ENCODE measurements at regions of chr19 and their contacts with region 1.

Region 1: GRCh38 chr19:13298565-13299481 is 148.6 kb downstream of the IER2 start:
- DNase-seq: no peak
- ATAC-seq: no peak
- H3K4me3 ChIP-seq: peak overlapping the region in 9 of 10 donors; percentile 3 to 38 (median 32)
- H3K27ac ChIP-seq: peak overlapping the region in 1 of 10 donors; percentile 19
- H3K4me1 ChIP-seq: no peaks in the 10 kb centered on the region
- H3K27me3 ChIP-seq: peaks cover 6 to 80% (median 54%) of the 10 kb centered on the region in 7 donors
- CTCF ChIP-seq: no peak

Region 2: DNA sequence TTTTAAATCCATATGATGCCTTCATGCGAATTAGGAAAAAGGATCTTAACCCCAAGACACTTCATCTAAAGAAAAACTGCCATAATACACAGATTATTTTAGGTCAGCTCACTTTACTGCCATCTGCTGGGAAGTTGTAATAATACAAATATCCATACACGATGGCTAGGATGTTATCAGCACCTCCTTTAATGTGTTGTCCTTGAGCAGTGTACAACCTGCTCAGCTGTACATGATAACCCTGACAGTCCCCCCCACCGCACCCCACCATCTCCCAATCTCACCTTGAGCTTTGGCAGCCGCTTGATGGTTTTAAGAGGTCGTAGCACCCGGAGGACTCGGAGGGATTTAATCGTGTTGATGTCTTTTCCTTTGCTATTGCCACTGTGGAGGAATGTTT is 36.4 kb before region 1 on chr19:
- intact Hi-C with region 1: no loop called
- DNase-seq: no peak
- ATAC-seq: peak; percentile 33 to 75 (median 58)
- H3K4me3 ChIP-seq: no peak overlapping the region
- H3K27ac ChIP-seq: no peak overlapping the region
- H3K4me1 ChIP-seq: peaks cover 0 to 18% (median 0%) of the 10 kb centered on the region in 9 donors
- H3K27me3 ChIP-seq: peaks cover 0 to 5% (median 0%) of the 10 kb centered on the region in 7 donors
- CTCF ChIP-seq: peak in 8 of 9 donors; percentile 39 to 76 (median 66)

Region 3: GRCh38 chr19:13277104-13277809 is 21.6 kb before region 1 on chr19:
- intact Hi-C with region 1: no loop called
- DNase-seq: peak; percentile 29 to 67
- ATAC-seq: peak; percentile 83 to 95 (median 92)
- H3K4me3 ChIP-seq: no peak overlapping the region
- H3K27ac ChIP-seq: peak overlapping the region in 1 of 10 donors; percentile 17
- H3K4me1 ChIP-seq: peaks cover 0 to 9% (median 0%) of the 10 kb centered on the region in 9 donors
- H3K27me3 ChIP-seq: peaks cover 0 to 16% (median 9%) of the 10 kb centered on the region in 7 donors
- CTCF ChIP-seq: peak; percentile 49 to 81 (median 73)

Region 4: DNA sequence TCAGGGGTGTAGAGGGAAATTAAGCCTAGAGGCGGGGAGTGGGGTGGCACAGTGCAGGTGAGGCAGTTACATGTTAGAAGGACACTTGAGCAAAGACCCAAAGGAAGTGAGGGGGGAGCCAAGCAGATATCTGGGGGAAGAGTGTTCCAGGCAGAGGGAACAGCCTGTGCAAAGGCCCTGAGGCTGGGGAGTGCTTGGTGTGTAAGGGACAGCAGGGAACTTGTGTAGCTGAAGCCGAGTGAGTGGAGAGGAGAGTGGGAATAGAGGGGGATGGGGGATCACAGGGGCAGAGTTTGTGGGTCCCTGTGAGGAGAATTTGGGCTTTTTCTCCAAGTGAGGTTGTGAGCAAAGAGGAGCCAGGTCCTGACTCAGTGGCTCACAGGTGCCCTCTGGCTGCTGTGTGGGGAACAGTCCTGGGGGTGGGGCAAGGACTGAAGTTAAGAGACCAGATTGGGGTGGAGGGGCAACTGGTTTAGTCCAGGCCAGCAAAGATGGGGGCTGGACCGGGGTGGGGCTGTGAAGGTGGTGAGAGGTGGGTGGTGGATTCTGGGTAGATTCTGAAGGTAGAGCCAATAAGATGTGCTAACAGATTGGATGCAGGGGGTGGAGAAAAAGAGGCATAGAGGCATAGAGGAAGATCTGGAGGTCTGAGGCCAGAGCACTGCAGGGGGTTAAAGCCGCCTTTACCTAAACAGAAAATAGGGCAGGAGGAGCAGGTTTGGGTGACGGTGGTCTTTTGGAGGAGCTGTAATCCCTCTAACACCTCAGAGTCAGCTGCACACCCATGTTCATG is 132.2 kb after region 1 on chr19:
- intact Hi-C with region 1: loop called in 1 of 10 experiments (anchors 10 kb)
- DNase-seq: peak; percentile 17 to 35
- ATAC-seq: peak in 3 of 8 donors; percentile 42 to 54 (median 48)
- H3K4me3 ChIP-seq: no peak overlapping the region
- H3K27ac ChIP-seq: no peak overlapping the region
- H3K4me1 ChIP-seq: peaks cover 0 to 5% (median 0%) of the 10 kb centered on the region in 9 donors
- H3K27me3 ChIP-seq: no peaks in the 10 kb centered on the region
- CTCF ChIP-seq: peak in 8 of 9 donors; percentile 33 to 68 (median 58)

Measured in heart right ventricle (tissue), 16 donors.